Activated B cell treated with CpG ODN at 0.5 μM for 24 hours (primary cell): ENCODE measurements at regions of chr4 and their contacts with region 1.

Region 1: GRCh38 chr4:6815029-6815836 is 32.7 kb downstream of the KIAA0232 start:
- DNase-seq: no peak
- ATAC-seq: no peak
- H3K4me3 Mint-ChIP-seq: no peak overlapping the region
- H3K27ac Mint-ChIP-seq: no peak overlapping the region
- H3K4me1 Mint-ChIP-seq: peaks cover 28% of the 10 kb centered on the region
- H3K27me3 Mint-ChIP-seq: no peaks in the 10 kb centered on the region
- CTCF ChIP-seq: no peak

Region 2: GRCh38 chr4:6794189-6794588 is 21.0 kb before region 1 on chr4:
- CTCF ChIA-PET with region 1: no interaction called
- POLR2A ChIA-PET with region 1: no interaction called
- intact Hi-C with region 1: no loop called
- DNase-seq: no peak
- ATAC-seq: no peak
- H3K4me3 Mint-ChIP-seq: no peak overlapping the region
- H3K27ac Mint-ChIP-seq: no peak overlapping the region
- H3K4me1 Mint-ChIP-seq: peaks cover 27% of the 10 kb centered on the region
- H3K27me3 Mint-ChIP-seq: no peaks in the 10 kb centered on the region
- CTCF ChIP-seq: no peak

Region 3: DNA sequence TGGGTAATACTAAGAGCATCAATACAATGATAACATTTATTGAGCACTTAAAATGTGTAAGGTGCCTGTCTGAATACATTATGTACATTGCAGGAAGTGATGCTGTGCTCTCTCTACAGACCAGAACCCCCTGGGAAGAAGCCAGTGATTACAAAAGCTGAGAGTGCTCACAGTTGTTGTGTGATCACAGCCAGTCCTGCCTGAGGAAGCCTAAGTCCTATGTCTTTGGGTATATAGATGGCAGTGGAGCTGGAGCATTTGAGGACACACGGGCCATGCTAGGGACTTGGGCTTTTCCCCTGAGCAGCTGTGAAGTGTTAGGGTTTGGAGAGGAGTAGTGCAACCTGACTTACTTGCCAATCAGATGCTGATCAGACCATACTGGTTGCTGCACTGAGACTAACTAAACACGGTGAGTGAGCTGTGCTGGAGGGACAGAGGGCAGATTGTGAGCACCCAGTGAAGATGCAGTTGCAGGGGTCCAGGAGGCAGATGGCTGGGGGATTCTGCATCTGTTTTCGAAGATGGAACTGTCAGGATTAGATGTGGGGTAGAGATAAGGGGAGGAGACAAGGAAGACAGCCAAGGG is 33.6 kb after region 1 on chr4:
- CTCF ChIA-PET with region 1: no interaction called
- POLR2A ChIA-PET with region 1: no interaction called
- intact Hi-C with region 1: loop called (anchors 5 kb)
- DNase-seq: no peak
- ATAC-seq: no peak
- H3K4me3 Mint-ChIP-seq: no peak overlapping the region
- H3K27ac Mint-ChIP-seq: no peak overlapping the region
- H3K4me1 Mint-ChIP-seq: peaks cover 8% of the 10 kb centered on the region
- H3K27me3 Mint-ChIP-seq: no peaks in the 10 kb centered on the region
- CTCF ChIP-seq: no peak

Region 4: DNA sequence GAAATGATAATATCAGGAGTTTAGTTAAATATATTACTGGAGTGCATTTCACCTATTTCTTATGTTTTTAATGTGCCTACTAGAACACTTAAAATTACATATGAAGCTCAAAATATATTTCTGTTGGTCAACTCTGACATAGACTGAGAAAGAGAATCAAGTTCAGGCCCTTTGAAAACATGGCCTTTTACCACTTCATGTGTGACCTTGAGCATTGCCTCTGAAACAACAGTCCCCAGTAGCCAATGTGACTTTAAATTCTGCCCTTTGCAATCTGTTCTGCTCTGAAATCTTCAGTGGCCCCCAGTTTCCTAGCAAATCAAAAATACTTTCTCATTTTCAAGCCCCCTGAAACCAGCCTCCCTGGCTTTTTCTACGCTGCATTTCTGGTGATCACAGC is 44.3 kb after region 1 on chr4:
- CTCF ChIA-PET with region 1: no interaction called
- POLR2A ChIA-PET with region 1: no interaction called
- intact Hi-C with region 1: no loop called
- DNase-seq: no peak
- ATAC-seq: no peak
- H3K4me3 Mint-ChIP-seq: no peak overlapping the region
- H3K27ac Mint-ChIP-seq: no peak overlapping the region
- H3K4me1 Mint-ChIP-seq: peaks cover 10% of the 10 kb centered on the region
- H3K27me3 Mint-ChIP-seq: no peaks in the 10 kb centered on the region
- CTCF ChIP-seq: no peak

Region 5: DNA sequence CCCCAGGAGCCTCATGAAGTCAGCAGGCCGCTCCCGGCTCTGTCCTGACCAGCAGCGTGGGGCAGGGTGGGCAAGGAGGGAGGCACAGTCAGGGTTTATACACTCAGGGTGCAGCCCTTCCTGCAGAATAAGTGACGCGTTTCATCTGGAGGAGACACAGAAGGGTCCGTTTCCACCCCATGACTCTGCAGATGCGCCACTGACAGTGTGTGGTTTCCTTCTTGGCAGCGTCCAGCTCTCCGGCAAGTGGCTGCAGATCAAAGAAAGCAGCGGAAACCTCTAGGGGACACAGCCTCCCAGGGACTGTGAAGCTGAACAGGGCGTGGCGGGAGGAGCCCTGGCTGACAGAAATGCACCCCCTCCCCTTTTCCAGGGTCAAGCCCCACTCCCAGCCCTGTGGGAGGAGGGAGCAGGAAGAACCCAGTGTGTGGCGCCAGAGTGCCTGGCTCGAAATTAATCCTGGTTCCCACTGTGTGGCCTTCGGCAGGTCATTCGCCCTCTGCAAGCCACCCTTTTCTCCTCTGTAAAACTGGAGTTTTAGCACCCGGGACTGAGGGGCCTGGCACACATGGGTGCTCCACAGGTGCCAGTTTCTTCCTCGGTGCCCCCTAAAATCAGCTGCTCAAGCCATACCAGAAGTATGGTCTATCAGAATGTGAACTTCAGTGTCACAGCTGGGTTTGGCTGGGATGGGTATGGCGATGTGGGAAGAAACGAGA is 77.1 kb after region 1 on chr4:
- CTCF ChIA-PET with region 1: no interaction called
- POLR2A ChIA-PET with region 1: no interaction called
- intact Hi-C with region 1: no loop called
- DNase-seq: no peak
- ATAC-seq: no peak
- H3K4me3 Mint-ChIP-seq: no peak overlapping the region
- H3K27ac Mint-ChIP-seq: no peak overlapping the region
- H3K4me1 Mint-ChIP-seq: peaks cover 14% of the 10 kb centered on the region
- H3K27me3 Mint-ChIP-seq: no peaks in the 10 kb centered on the region
- CTCF ChIP-seq: no peak